ENCODE measurements at regions of chr4 and their contacts with region 1.

Region 1: DNA sequence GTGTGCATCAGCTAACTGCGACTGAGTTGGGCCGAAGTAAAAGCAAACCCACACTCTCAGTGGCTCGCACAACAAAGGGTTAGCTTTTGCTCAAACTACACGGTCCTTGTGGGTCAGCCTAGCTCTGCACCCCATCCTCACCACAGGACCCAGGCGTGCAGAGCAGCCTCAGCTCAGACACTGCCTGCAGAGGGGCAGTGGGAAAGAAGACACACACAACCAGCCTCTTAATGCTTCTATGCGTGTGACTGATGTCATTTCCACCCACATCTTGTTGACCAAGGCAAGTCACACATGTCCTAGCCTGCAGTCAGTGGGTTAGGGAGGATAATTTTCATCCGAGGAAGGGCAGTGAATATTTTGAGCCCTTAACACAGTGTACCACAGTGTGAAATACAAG is 40.5 kb downstream of the HMGB2 start:
- DNase-seq: no peak
- ATAC-seq: no peak

Region 2: GRCh38 chr4:173013232-173013930 is 280.3 kb before region 1 on chr4:
- intact Hi-C with region 1: loop called (anchors 1 kb)
- DNase-seq: no peak
- ATAC-seq: peak; percentile 70

Region 3: DNA sequence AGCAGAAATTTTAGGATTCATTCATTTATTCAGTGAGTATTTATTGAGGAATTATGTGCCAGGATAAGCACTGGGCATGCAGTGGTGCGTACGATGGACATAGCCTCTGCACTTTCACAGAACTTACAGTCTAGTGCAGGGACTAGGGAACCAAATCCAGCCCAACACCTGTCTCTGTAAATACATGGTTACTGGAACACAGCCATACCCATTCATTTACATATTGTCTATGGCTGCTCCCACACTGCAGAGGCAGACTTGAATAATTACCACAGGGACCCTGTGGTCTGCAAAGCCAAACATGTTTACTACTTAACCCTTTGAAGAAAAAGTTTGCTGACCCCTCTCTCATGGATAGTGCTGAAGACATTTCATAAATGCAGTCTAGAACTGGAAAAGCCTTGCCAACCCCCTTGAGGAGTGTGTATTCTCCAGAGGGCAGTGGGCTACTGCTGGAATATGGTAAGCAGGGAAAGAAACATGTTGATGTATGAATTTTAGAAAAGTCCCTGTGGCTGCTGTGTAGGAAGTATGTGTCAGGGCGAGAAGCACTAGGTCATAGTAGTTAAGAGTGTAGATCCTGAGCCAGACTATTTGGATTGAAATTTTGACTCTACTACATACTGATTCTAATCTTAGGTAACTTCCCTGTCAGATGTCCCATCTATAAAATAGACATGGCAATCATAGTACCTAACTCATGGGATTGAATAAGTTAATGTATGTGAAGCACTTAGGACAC is 49.6 kb before region 1 on chr4:
- intact Hi-C with region 1: no loop called
- DNase-seq: no peak
- ATAC-seq: no peak

Region 4: DNA sequence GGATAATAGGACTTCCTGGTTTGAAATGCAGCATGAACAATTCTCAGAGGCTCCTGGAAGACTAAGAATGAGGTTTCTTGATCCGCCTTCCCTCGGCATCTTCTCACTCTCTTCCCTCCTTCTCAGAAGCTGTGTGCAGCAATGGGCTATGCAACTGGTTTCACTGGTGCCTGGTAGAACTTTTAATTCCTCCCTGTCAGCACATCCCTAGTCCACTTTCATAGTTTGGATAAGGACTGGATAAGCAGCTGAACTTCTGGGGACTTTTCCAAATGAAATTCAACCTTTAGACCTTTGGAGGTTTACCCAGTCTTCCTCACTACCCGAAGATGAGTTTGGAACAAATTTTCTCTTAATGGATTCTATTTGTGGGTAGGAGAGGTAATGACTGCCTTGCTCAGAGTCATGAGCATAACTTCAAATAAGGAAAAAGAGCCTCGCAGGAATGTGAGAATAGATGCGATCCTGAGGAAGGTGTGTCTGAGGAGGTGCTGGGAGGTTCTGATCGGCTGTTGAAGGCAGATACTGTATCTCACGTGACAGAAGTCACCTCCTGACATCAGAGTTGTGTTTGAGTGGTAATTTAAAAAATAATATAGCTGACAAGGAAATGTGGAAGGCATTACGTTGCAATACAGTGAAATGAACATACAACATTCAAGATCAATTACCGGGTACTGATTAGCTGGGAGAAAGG is 292.4 kb after region 1 on chr4:
- intact Hi-C with region 1: no loop called
- DNase-seq: no peak
- ATAC-seq: no peak

Region 5: DNA sequence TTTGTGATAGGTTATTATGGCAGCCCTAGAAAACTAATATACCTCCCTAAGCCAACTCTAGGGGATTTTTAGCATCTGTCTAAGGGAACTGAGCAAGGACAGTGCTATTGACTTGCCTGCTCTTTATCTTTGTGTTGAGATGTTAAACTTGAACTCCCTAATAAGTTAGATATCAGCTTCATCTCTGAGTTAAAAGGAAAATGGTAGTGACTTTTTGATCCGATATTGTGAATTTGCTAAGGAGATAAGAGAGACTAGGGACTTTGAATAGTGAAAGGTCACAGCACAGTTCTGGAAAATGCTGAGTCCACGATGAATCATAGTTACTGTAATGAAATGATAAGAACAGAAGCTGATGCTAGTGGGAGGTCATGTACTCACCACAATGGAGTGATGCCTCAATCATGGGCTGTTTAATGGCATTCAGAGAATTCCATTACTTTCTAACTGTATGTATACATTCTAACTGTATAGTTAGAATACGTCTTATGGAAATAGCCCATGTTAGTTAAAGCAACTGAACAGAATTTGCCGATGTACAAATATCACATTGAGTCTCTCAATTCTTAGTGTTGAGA is 1388.1 kb after region 1 on chr4:
- intact Hi-C with region 1: no loop called
- DNase-seq: no peak
- ATAC-seq: no peak